ENCODE measurements at regions of chr1 and their contacts with region 1.

Region 1: GRCh38 chr1:44835738-44836675 is 7.0 kb downstream of the PTCH2 start:
- DNase-seq: peak; percentile 66
- H3K4me3 ChIP-seq: no peak overlapping the region
- H3K27ac ChIP-seq: no peak overlapping the region
- H3K4me1 ChIP-seq: no peaks in the 10 kb centered on the region
- H3K27me3 ChIP-seq: no peaks in the 10 kb centered on the region
- CTCF ChIP-seq: peak; percentile 89 to 91

Region 2: DNA sequence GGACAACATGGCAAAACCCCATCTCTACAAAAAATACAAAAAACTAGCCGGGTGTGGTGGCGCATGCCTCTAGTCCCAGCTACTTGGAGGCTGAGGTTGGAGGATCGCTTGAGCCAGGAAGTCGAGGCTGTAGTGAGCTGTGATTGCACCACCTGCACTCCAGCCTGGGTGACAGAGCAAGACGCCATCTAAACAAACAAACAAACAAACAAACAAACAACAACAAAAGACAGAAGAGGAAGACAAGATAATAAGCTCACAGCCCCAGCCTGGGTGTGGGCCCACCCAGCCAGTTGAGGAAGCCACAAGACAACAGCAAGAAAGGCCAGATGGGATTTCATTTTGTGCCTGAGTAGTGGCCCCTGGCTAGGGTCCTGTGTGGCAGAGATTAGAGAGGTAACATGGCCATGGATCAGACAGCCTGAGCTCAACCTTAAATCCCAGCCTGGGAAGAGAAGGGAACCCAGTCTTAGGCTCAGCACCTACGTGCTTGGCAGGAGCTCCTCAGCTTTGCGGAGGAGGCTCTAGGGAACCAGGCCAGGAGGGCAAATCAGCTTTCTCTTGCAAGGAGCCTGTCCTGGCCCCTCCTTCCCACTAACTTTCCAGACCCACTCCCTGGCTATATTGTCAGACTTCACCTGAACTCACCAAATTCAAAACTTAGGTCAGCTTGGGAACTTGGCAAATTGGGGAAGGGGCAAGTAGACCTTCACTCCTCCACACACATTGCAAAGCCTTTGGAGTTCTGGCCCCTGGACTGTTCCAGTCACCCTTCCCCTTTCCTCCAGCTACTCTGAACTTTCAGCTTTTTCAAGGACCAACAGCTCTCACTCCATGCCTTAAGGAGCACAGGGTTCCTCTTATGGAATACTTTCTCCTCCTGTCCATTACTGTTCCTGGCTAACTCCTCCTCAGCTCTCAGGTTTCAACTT is 43.0 kb before region 1 on chr1:
- CTCF ChIA-PET with region 1: no interaction called
- dilution Hi-C with region 1: no loop called
- in situ Hi-C with region 1: no loop called
- intact Hi-C with region 1: loop called (anchors 5 kb)
- DNase-seq: no peak
- H3K4me3 ChIP-seq: no peak overlapping the region
- H3K27ac ChIP-seq: peak overlapping the region; percentile 66
- H3K4me1 ChIP-seq: peaks cover 8% of the 10 kb centered on the region
- H3K27me3 ChIP-seq: no peaks in the 10 kb centered on the region
- CTCF ChIP-seq: no peak

Region 3: GRCh38 chr1:44907893-44908292 is 71.9 kb after region 1 on chr1:
- CTCF ChIA-PET with region 1: no interaction called
- dilution Hi-C with region 1: no loop called
- in situ Hi-C with region 1: no loop called
- intact Hi-C with region 1: no loop called
- DNase-seq: no peak
- H3K4me3 ChIP-seq: no peak overlapping the region
- H3K27ac ChIP-seq: no peak overlapping the region
- H3K4me1 ChIP-seq: no peaks in the 10 kb centered on the region
- H3K27me3 ChIP-seq: no peaks in the 10 kb centered on the region
- CTCF ChIP-seq: no peak

Region 4: GRCh38 chr1:44973645-44974044 is 137.6 kb after region 1 on chr1:
- CTCF ChIA-PET with region 1: no interaction called
- dilution Hi-C with region 1: no loop called
- in situ Hi-C with region 1: no loop called
- intact Hi-C with region 1: no loop called
- DNase-seq: no peak
- H3K4me3 ChIP-seq: no peak overlapping the region
- H3K27ac ChIP-seq: no peak overlapping the region
- H3K4me1 ChIP-seq: peaks cover 5% of the 10 kb centered on the region
- H3K27me3 ChIP-seq: no peaks in the 10 kb centered on the region
- CTCF ChIP-seq: no peak

Region 5: GRCh38 chr1:44994309-44994898 is 158.4 kb after region 1 on chr1:
- CTCF ChIA-PET with region 1: no interaction called
- dilution Hi-C with region 1: loop called (anchors 5 kb)
- in situ Hi-C with region 1: no loop called
- intact Hi-C with region 1: loop called (anchors 5 kb)
- DNase-seq: no peak
- H3K4me3 ChIP-seq: no peak overlapping the region
- H3K27ac ChIP-seq: no peak overlapping the region
- H3K4me1 ChIP-seq: no peaks in the 10 kb centered on the region
- H3K27me3 ChIP-seq: no peaks in the 10 kb centered on the region
- CTCF ChIP-seq: no peak

Region 6: DNA sequence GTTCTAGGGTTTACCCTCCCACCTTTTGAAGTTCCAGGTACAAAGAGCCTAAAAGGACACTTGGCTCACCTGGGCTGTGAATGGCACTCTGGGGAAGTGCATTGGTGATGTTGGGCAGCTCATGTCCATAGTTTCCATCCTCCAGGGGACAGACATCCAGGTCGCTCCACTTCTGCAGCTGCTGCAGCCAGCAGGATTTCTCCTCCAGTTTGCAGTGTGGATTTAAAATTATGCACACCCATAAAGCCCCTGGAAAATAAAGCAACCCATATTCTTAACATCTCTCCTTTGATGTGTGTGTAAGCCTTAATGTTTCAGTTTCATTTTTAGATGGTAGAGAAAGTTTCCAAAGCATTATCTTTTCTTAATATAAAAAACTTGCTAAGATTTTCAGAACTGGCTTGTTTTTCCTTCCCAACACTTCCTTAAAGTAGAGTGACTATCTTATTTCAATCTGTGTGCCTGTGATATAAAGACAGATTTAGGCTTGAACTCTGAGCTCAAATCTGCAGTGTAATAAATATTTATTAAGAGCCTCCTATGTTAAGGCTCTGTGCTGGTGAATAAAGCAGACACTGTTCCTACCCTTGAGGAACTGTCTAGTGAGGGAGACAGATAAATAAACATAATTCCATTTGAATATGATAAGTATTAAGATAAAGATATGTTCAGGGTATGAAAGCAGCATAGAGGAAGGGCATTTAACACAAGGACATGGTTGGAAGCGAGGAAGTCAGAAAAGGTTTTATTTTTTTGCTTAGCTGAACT is 215.2 kb after region 1 on chr1:
- CTCF ChIA-PET with region 1: no interaction called
- dilution Hi-C with region 1: no loop called
- in situ Hi-C with region 1: no loop called
- intact Hi-C with region 1: no loop called
- DNase-seq: no peak
- H3K4me3 ChIP-seq: no peak overlapping the region
- H3K27ac ChIP-seq: no peak overlapping the region
- H3K4me1 ChIP-seq: no peaks in the 10 kb centered on the region
- H3K27me3 ChIP-seq: no peaks in the 10 kb centered on the region
- CTCF ChIP-seq: no peak

Region 7: DNA sequence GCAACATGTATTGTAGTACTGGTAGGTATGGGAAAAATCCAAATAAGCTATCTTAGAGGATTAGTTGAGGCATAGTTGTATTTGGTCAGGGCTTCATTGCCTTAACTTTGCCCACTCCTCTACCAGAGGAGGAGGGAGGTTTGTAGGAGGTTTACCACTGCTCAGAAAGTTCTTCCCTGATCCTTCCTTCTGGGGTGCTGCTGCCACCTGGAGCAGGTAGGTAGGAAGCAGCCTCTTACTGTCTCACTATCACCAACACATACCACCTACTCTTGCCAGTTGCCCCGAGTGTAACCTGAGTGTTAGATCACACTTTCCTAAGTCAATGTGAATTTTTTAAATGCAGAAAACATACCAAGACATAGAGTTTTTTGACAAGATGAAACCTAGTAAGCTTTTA is 394.5 kb after region 1 on chr1:
- CTCF ChIA-PET with region 1: interaction called, 5 read pairs
- dilution Hi-C with region 1: no loop called
- in situ Hi-C with region 1: no loop called
- intact Hi-C with region 1: loop called (anchors 1 kb)
- DNase-seq: no peak
- H3K4me3 ChIP-seq: no peak overlapping the region
- H3K27ac ChIP-seq: no peak overlapping the region
- H3K4me1 ChIP-seq: no peaks in the 10 kb centered on the region
- H3K27me3 ChIP-seq: no peaks in the 10 kb centered on the region
- CTCF ChIP-seq: peak in 1 of 2 donors; percentile 66